Left cardiac atrium (tissue), 4 donors: ENCODE measurements at regions of chr6 and their contacts with region 1.

Region 1: DNA sequence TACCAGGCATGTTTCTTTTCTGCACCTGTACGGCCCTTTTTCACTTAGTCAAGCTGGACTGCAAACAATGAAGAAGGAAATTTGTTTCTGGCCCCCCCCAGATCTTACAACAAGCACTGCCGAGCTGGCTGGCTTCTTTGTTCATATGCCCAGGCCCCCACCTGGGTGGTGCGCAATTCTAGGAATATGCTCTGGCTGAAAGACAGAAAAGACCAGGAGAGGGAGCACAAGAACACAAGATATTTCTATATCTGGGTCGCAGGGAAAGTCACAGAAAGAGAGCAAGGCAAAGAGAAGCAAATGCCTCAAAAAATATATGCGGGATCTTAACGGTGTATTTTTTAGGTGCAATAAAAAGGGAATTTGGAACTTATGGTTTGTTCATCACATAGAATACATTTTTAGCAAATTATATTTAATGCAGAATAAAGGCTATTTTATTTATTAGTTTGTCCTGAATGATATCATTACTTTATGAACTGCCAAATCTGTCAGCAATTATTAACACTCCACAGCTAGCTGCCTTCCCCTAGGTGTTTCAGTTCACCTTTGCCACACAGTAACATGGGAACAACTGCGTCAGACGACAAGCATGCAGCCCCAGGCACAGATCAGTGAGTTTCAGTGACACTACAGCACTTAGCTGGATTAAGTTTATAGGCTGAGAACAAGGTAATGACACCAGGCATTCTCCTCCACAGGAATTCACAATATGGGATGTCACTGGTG is 76.5 kb downstream of the GJA10 start:
- DNase-seq: peak; percentile 28
- ATAC-seq: peak; percentile 81 to 84

Region 2: GRCh38 chr6:90103056-90103800 is 132.5 kb after region 1 on chr6:
- intact Hi-C with region 1: loop called in 1 of 2 experiments (anchors 10 kb)
- DNase-seq: no peak
- ATAC-seq: no peak

Region 3: DNA sequence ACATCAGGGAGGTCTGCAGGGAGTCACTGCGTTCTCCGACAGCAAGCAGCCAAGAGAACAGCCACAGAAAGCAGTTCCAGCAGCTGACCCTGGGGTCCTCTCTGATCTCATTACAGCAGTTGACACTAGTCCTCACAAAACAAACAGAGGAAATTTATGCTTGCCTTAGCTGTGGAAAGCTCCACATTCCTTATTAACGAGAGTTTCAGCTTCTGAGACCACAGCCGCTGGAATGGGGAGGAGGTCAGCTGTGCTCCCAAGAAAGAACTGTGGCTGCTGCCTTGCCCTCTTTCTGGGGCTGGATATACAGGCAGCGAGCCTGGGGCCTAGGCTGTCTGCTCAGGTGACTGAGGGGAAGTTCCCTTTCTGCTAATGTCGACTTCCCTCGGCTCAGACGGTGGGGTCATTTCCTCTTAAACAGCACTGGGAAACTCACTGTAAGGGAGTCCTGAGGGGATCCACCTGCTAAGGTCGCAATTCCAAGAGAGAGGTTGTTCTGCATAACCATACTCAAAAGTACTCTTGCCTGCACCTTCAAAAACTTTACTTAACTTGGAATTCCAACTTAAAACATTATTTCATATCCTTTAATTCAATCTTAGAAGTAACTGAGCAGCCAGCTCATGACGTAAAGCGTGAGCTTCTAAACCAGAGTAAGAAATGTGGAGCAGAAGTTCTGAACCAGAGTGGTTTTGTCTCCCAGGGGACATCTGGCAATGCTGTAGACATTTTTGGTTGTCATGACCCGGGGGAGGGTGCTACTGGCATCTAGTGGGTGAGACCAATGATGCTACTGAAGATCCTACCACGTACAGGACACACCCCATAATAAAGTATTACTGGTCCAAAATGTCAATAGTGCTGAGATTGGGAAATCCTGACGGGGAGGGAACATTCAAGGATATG is 245.6 kb after region 1 on chr6:
- intact Hi-C with region 1: loop called in 1 of 2 experiments (anchors 10 kb)
- DNase-seq: no peak
- ATAC-seq: no peak

Region 4: DNA sequence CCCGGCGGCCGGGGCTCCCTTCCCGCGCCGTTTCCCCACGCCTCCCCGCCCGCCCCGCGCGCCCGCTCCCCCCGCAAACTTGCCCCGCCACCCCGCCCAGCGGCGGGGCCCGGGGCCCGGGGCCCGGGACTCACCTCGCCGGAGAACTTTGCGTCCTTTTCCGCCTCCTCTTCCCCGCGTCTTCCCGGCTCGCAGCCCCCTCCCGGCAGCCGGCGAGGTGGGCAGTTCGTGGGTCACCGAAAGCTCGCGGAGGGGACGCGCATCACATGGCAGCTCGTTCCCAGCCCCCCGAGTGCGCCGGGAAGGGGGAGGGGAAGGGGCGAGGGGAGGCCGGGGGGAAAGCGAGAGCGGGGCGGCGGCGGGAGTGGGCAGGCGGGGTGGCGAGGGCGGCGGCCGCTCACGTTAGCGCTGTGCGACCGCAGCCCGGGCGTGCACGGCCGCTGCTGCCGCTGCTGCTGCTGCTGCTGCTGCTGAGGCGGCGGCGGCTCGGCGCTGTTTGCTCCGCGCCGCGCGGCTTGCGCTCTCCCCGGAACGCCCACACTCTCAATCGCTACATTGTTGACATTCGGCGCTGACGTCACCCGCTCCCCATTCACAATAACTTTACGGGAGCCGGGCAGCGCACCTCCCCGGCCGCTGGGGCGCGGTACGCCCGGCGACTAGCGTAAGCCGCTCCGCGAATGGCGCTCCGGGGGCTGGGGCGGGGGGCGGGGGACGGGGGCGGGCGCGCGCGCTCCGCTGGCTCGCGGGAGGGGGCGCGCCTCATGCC is 325.8 kb after region 1 on chr6 and contains the start of gene BACH2:
- intact Hi-C with region 1: loop called in 1 of 2 experiments (anchors 10 kb)
- DNase-seq: peak; percentile 94
- ATAC-seq: peak; percentile 72 to 76
- total RNA-seq, gene BACH2: 2.0 to 2.5 TPM

Region 5: GRCh38 chr6:90383196-90383822 is 412.5 kb after region 1 on chr6:
- intact Hi-C with region 1: loop called in 1 of 2 experiments (anchors 10 kb)
- DNase-seq: no peak
- ATAC-seq: no peak

Region 6: GRCh38 chr6:90393232-90393884 is 422.6 kb after region 1 on chr6:
- intact Hi-C with region 1: loop called (anchors 2 to 10 kb)
- DNase-seq: peak; percentile 47
- ATAC-seq: peak; percentile 55 to 75